HepG2 (cell line): ENCODE measurements at regions of chr11 and their contacts with region 1.

Region 1: DNA sequence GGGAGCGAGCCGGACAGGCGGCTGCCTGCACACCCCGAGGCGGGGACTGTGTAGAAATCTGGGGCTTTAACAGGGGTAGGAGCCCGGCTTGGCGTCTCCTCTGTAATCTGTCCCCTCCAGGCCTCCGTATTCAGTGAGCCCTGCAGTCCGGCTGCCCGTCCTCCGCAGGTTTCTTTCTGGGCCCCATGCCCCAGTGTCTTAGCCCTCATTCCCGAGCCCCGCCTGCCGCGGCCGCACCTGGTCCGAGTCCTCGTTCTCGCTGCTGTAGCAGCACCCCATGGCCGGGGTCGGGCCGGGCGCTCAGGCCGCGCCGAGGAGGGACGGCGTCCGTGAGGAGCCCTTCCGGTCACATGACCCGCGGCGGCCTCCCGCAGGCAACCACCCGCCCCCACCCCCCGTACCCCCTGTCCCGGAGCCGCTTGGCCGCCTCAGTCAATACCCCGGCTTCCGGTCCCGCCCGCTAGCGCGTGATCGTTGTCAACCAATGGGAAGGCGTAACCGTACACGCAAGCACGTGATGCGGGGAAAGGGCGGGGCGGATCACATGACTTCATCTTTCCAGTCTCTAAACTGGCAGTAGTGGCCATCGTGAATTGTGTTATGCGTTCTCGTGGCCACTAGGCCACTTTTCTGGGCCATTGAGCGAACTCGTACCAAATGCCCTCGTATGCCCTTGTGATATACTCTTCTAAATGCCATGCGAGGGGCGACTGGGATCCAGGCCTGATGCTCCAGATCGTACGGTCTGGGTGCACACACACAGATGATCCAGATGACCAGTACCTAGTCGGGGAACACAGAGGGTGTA is at the start of gene LAMTOR1:
- DNase-seq: peak; percentile 97
- ATAC-seq: peak; percentile 90
- H3K4me3 ChIP-seq: peak within 1 kb of the TSS; percentile 79 to 85 (median 82)
- H3K27ac ChIP-seq: peak within 1 kb of the TSS; percentile 82
- H3K4me1 ChIP-seq: peaks cover 39% of the 10 kb centered on the region
- H3K27me3 ChIP-seq: no peaks in the 10 kb centered on the region; a peak in 1 of 5 replicates
- CTCF ChIP-seq: peak; percentile 33; the same call in 1 of the 2 replicates
- EP300 ChIP-seq: no peak
- POLR2A ChIP-seq: peak; percentile 77 to 86
- RAD21 ChIP-seq: peak; percentile 39; the same call in 1 of the 2 replicates
- total RNA-seq, gene LAMTOR1: 63.4 and 66.0 TPM in 2 replicates

Region 2: DNA sequence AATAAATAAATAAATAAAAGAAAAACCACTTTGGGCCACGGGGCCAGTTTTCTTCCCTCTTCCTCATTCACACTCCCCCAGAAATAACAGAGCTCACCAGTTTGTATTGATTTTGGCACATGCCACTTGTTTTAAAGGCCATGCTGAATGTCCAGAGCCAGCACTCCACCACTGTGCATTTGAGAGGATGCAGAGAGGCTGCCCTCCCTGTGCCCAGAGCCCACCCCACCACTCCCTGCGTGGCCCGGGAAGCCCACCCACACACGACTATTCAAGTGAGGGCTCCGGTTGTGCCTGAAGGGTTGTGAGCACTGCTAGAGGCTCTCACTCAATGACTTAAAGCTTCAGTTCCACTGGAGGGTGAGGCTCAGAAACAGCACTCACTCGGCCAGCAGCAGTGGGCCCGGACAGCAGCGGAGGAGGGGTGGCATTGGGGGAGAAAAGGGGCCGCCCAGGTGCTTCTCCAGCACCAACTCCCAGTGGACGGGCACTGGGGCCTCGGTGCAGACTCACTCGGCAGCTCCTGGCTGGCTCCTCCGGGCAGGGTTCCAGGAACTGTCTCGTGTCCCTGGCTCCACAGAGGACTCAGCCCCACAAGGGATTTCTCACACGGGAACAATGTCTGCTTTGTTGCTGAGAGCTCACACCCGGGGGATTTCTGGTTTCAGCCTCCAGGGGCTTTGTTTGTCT is 963.5 kb before region 1 on chr11:
- CTCF ChIA-PET with region 1: no interaction called
- POLR2A ChIA-PET with region 1: no interaction called
- in situ Hi-C with region 1: no loop called
- intact Hi-C with region 1: no loop called
- DNase-seq: peak; percentile 9
- ATAC-seq: no peak
- H3K4me3 ChIP-seq: no peak overlapping the region
- H3K27ac ChIP-seq: no peak overlapping the region
- H3K4me1 ChIP-seq: no peaks in the 10 kb centered on the region
- H3K27me3 ChIP-seq: no peaks in the 10 kb centered on the region
- CTCF ChIP-seq: no peak
- EP300 ChIP-seq: no peak
- POLR2A ChIP-seq: no peak
- RAD21 ChIP-seq: no peak

Region 3: GRCh38 chr11:72080256-72080974 is 22.7 kb before region 1 on chr11 and contains the starts of genes LRRC51 and NUMA1:
- CTCF ChIA-PET with region 1: no interaction called
- POLR2A ChIA-PET with region 1: interaction called, 3 read pairs
- in situ Hi-C with region 1: no loop called
- intact Hi-C with region 1: loop called (anchors 2 kb)
- DNase-seq: peak; percentile 99
- ATAC-seq: peak; percentile 97
- H3K4me3 ChIP-seq: peak within 1 kb of the TSS; percentile 71 to 92 (median 83)
- H3K27ac ChIP-seq: peak within 1 kb of the TSS; percentile 86
- H3K4me1 ChIP-seq: peaks cover 24% of the 10 kb centered on the region
- H3K27me3 ChIP-seq: no peaks in the 10 kb centered on the region; a peak in 1 of 5 replicates
- CTCF ChIP-seq: no peak
- EP300 ChIP-seq: 0 out of 4 replicates have a peak, but pooled peaks have one; percentile 8 to 20
- POLR2A ChIP-seq: peak; percentile 58 to 74; a peak in 2 of 4 replicates
- RAD21 ChIP-seq: peak; percentile 8; the same call in 1 of the 2 replicates
- total RNA-seq, gene LRRC51: 6.0 and 6.4 TPM in 2 replicates
- total RNA-seq, gene NUMA1: 60.2 and 67.7 TPM in 2 replicates

Region 4: GRCh38 chr11:72160319-72160718 is 57.2 kb after region 1 on chr11:
- CTCF ChIA-PET with region 1: no interaction called
- POLR2A ChIA-PET with region 1: no interaction called
- in situ Hi-C with region 1: no loop called
- intact Hi-C with region 1: no loop called
- DNase-seq: no peak
- ATAC-seq: no peak
- H3K4me3 ChIP-seq: no peak overlapping the region
- H3K27ac ChIP-seq: no peak overlapping the region
- H3K4me1 ChIP-seq: peaks cover 9% of the 10 kb centered on the region; the same call in 1 of the 2 replicates
- H3K27me3 ChIP-seq: no peaks in the 10 kb centered on the region; a peak in 1 of 5 replicates
- CTCF ChIP-seq: no peak
- EP300 ChIP-seq: no peak
- POLR2A ChIP-seq: no peak
- RAD21 ChIP-seq: no peak

Region 5: GRCh38 chr11:73633999-73634398 is 1530.8 kb after region 1 on chr11:
- CTCF ChIA-PET with region 1: no interaction called
- POLR2A ChIA-PET with region 1: no interaction called
- in situ Hi-C with region 1: no loop called
- intact Hi-C with region 1: no loop called
- DNase-seq: no peak
- ATAC-seq: no peak
- H3K4me3 ChIP-seq: no peak overlapping the region
- H3K27ac ChIP-seq: no peak overlapping the region
- H3K4me1 ChIP-seq: peaks cover 12% of the 10 kb centered on the region
- H3K27me3 ChIP-seq: no peaks in the 10 kb centered on the region
- CTCF ChIP-seq: no peak
- EP300 ChIP-seq: no peak
- POLR2A ChIP-seq: no peak
- RAD21 ChIP-seq: no peak